Left cardiac atrium (tissue), 4 donors: ENCODE measurements at regions of chrX and their contacts with region 1.

Region 1: GRCh38 chrX:68196939-68197791 is 236.1 kb downstream of the OPHN1 start:
- DNase-seq: no peak
- ATAC-seq: peak in 1 of 2 donors; percentile 49

Region 2: DNA sequence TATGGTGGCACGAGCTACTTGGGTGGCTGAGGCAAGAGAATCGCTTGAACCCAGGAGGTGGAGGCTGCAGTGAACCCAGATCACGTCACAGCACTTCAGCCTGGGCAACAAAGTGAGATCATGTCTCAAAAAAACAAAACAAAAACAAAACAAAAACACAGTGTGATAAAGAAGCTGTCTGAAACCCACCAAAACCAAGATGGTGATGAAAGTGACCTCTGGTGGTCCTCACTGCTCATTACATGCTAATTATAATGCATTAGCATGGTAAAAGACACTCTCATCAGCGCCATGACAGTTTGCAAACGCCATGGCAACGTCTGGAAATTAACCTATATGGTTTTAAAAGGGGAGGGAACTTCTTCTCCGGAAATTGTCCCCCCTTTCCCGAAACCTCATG is 265.5 kb after region 1 on chrX:
- intact Hi-C with region 1: loop called (anchors 2 to 10 kb)
- DNase-seq: no peak
- ATAC-seq: peak in 1 of 2 donors; percentile 27

Region 3: GRCh38 chrX:68710870-68711576 is 513.9 kb after region 1 on chrX:
- intact Hi-C with region 1: loop called in 1 of 2 experiments (anchors 5 kb)
- DNase-seq: peak; percentile 32
- ATAC-seq: peak; percentile 78 to 79

Region 4: GRCh38 chrX:68721546-68721945 is 524.4 kb after region 1 on chrX:
- intact Hi-C with region 1: no loop called
- DNase-seq: no peak
- ATAC-seq: no peak